ENCODE measurements at regions of chr2 and their contacts with region 1.

Region 1: GRCh38 chr2:182077451-182078142 is 91.9 kb downstream of the PPP1R1C start:
- DNase-seq: peak in 2 of 9 experiments; percentile 36 to 37
- ATAC-seq: no peak
- H3K4me3 ChIP-seq: no peak overlapping the region
- H3K4me3 Mint-ChIP-seq: no peak overlapping the region
- H3K27ac ChIP-seq: no peak overlapping the region
- H3K27ac Mint-ChIP-seq: no peak overlapping the region
- H3K4me1 ChIP-seq: no peaks in the 10 kb centered on the region
- H3K4me1 Mint-ChIP-seq: no peaks in the 10 kb centered on the region
- H3K27me3 ChIP-seq: no peaks in the 10 kb centered on the region
- H3K27me3 Mint-ChIP-seq: peaks cover 4% of the 10 kb centered on the region
- CTCF ChIP-seq: peak; percentile 47

Region 2: DNA sequence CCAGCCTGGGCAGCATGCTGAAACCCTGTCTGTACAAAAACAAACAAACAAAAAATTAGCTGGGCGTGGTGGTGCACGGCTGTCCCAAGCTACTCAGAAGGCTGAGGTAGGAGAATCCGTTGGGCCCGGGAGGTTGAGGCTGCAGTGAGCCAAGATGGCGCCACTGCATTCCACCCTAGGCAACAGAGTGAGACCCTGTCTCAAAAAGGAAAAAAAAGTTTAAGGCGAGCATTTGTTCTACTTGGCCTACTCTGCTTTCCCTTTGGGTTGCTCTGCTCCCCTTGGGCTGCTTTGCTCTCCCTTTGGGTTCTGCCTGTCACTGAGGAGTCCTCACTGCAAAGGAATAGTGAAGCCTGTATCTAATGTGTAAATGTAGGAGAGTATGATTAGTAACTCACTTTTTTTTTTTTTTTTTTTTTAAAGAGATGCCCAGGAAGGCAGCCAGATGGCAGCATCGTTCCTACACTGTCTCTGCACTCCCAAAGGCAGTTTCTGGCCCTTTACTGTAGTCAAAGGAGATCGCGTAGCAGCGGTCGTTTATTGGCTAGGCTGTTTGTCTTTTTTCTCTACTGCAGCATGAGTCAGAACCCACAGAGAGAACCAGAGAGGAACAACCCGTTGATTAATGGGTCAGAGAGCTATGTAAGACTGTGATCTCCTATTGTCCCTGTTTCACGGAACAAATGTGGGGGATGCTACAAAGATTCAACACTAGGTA is 1952.2 kb before region 1 on chr2:
- CTCF ChIA-PET with region 1: no interaction called
- POLR2A ChIA-PET with region 1: no interaction called
- intact Hi-C with region 1: loop called in 1 of 2 experiments (anchors 5 kb)
- DNase-seq: peak; percentile 3 to 72 (median 35)
- ATAC-seq: peak; percentile 75
- H3K4me3 ChIP-seq: no peak overlapping the region
- H3K4me3 Mint-ChIP-seq: no peak overlapping the region
- H3K27ac ChIP-seq: no peak overlapping the region
- H3K27ac Mint-ChIP-seq: no peak overlapping the region
- H3K4me1 ChIP-seq: no peaks in the 10 kb centered on the region
- H3K4me1 Mint-ChIP-seq: peaks cover 2% of the 10 kb centered on the region
- H3K27me3 ChIP-seq: no peaks in the 10 kb centered on the region
- H3K27me3 Mint-ChIP-seq: peaks cover 11% of the 10 kb centered on the region
- CTCF ChIP-seq: no peak

Region 3: DNA sequence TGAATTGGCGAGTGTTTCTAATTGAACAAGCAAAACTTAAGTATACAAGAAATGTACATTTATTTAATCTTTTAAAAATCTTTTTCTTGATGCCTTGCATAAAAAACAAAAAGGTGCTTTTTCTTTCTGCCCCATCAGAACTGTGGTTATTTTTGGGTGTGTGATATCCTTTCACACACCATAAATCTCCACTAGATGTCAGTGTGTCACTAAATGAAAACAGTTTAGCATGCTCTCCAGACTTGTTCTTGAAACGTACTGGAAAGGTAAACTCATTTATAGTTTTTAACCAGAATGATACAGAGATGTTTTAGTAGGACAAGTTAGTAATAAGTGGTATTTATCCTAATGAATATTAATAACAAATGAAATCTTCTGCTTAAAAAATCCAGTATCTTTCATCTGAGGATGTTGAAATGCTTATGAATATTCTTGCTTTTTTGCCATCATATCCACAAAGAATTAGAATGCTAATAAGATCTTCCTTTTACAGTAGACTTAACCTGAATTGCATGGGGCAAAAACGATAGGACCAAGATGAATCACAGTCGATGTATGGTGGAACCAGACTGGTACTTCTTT is 1000.4 kb before region 1 on chr2:
- CTCF ChIA-PET with region 1: no interaction called
- POLR2A ChIA-PET with region 1: no interaction called
- intact Hi-C with region 1: loop called in 1 of 2 experiments (anchors 5 kb)
- DNase-seq: peak in 3 of 9 experiments; percentile 8 to 82 (median 76)
- ATAC-seq: peak; percentile 94
- H3K4me3 ChIP-seq: no peak overlapping the region
- H3K4me3 Mint-ChIP-seq: no peak overlapping the region
- H3K27ac ChIP-seq: no peak overlapping the region
- H3K27ac Mint-ChIP-seq: no peak overlapping the region
- H3K4me1 ChIP-seq: no peaks in the 10 kb centered on the region
- H3K4me1 Mint-ChIP-seq: no peaks in the 10 kb centered on the region
- H3K27me3 ChIP-seq: no peaks in the 10 kb centered on the region
- H3K27me3 Mint-ChIP-seq: no peaks in the 10 kb centered on the region
- CTCF ChIP-seq: peak; percentile 90

Region 4: DNA sequence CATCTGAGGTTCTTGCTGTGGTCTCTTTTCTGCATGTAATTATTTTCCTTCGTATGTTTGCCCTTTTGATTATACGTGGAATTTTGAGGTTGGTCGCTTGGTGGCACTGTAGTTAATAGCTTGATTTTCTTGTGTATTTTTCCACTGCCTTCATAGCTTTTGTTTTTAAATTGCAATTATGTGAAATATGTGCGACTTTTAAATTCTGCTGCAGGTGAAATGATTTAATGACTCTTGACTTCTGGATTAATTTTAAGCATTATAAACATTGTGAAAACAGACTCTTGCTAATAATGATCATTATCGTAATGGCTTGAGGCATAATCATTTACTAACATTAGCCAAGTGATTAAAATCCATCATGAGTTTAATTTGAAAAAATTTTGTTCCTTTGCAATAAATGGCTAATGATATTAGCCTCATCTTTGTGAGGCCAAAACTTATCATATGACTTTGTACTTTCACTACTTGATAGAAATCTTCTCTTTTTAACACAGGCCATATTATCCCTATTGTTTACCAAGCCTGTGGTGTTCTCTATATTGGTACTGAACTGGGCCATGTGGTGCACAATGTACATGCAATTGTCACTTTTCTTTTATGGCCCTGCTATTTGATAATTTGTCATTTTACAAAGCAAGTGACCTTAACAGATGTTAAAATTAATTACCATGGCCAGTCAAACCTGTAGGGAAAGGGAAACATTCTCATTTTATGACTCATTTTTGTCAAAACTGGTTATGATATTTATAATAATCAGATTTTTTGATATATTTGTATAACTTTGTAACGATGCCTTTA is 334.5 kb before region 1 on chr2:
- CTCF ChIA-PET with region 1: interaction called, 7 read pairs
- POLR2A ChIA-PET with region 1: no interaction called
- intact Hi-C with region 1: loop called in 1 of 2 experiments (anchors 2 kb)
- DNase-seq: peak in 6 of 9 experiments; percentile 6 to 60 (median 20)
- ATAC-seq: no peak
- H3K4me3 ChIP-seq: no peak overlapping the region
- H3K4me3 Mint-ChIP-seq: no peak overlapping the region
- H3K27ac ChIP-seq: no peak overlapping the region
- H3K27ac Mint-ChIP-seq: no peak overlapping the region
- H3K4me1 ChIP-seq: no peaks in the 10 kb centered on the region
- H3K4me1 Mint-ChIP-seq: no peaks in the 10 kb centered on the region
- H3K27me3 ChIP-seq: no peaks in the 10 kb centered on the region
- H3K27me3 Mint-ChIP-seq: peaks cover 4% of the 10 kb centered on the region
- CTCF ChIP-seq: peak; percentile 54

Region 5: GRCh38 chr2:182355815-182356214 is 278.2 kb after region 1 on chr2:
- CTCF ChIA-PET with region 1: no interaction called
- POLR2A ChIA-PET with region 1: no interaction called
- intact Hi-C with region 1: no loop called
- DNase-seq: no peak
- ATAC-seq: no peak
- H3K4me3 ChIP-seq: no peak overlapping the region
- H3K4me3 Mint-ChIP-seq: no peak overlapping the region
- H3K27ac ChIP-seq: no peak overlapping the region
- H3K27ac Mint-ChIP-seq: no peak overlapping the region
- H3K4me1 ChIP-seq: no peaks in the 10 kb centered on the region
- H3K4me1 Mint-ChIP-seq: no peaks in the 10 kb centered on the region
- H3K27me3 ChIP-seq: no peaks in the 10 kb centered on the region
- H3K27me3 Mint-ChIP-seq: no peaks in the 10 kb centered on the region
- CTCF ChIP-seq: no peak

Region 6: GRCh38 chr2:182463760-182464159 is 386.2 kb after region 1 on chr2:
- CTCF ChIA-PET with region 1: no interaction called
- POLR2A ChIA-PET with region 1: no interaction called
- intact Hi-C with region 1: no loop called
- DNase-seq: no peak
- ATAC-seq: no peak
- H3K4me3 ChIP-seq: no peak overlapping the region
- H3K4me3 Mint-ChIP-seq: no peak overlapping the region
- H3K27ac ChIP-seq: no peak overlapping the region
- H3K27ac Mint-ChIP-seq: no peak overlapping the region
- H3K4me1 ChIP-seq: no peaks in the 10 kb centered on the region
- H3K4me1 Mint-ChIP-seq: no peaks in the 10 kb centered on the region
- H3K27me3 ChIP-seq: no peaks in the 10 kb centered on the region
- H3K27me3 Mint-ChIP-seq: no peaks in the 10 kb centered on the region
- CTCF ChIP-seq: no peak